ENCODE measurements at regions of chr2 and their contacts with region 1.

Region 1: GRCh38 chr2:164620873-164621626 is at the start of gene GRB14:
- DNase-seq: peak; percentile 80
- ATAC-seq: peak; percentile 87
- H3K4me3 Mint-ChIP-seq: peak within 1 kb of the TSS; percentile 84
- H3K27ac Mint-ChIP-seq: peak within 1 kb of the TSS; percentile 83
- H3K4me1 Mint-ChIP-seq: peaks cover 49% of the 10 kb centered on the region
- H3K27me3 Mint-ChIP-seq: no peaks in the 10 kb centered on the region
- CTCF ChIP-seq: no peak
- total RNA-seq, gene GRB14: 14.9 to 17.2 TPM (median 17.2 TPM) in 3 replicates

Region 2: GRCh38 chr2:164581050-164581449 is 40.0 kb before region 1 on chr2:
- CTCF ChIA-PET with region 1: no interaction called
- POLR2A ChIA-PET with region 1: interaction called, 11 read pairs
- DNase-seq: no peak
- ATAC-seq: no peak
- H3K4me3 Mint-ChIP-seq: no peak overlapping the region
- H3K27ac Mint-ChIP-seq: peak overlapping the region; percentile 2
- H3K4me1 Mint-ChIP-seq: peaks cover 7% of the 10 kb centered on the region
- H3K27me3 Mint-ChIP-seq: no peaks in the 10 kb centered on the region
- CTCF ChIP-seq: no peak

Region 3: DNA sequence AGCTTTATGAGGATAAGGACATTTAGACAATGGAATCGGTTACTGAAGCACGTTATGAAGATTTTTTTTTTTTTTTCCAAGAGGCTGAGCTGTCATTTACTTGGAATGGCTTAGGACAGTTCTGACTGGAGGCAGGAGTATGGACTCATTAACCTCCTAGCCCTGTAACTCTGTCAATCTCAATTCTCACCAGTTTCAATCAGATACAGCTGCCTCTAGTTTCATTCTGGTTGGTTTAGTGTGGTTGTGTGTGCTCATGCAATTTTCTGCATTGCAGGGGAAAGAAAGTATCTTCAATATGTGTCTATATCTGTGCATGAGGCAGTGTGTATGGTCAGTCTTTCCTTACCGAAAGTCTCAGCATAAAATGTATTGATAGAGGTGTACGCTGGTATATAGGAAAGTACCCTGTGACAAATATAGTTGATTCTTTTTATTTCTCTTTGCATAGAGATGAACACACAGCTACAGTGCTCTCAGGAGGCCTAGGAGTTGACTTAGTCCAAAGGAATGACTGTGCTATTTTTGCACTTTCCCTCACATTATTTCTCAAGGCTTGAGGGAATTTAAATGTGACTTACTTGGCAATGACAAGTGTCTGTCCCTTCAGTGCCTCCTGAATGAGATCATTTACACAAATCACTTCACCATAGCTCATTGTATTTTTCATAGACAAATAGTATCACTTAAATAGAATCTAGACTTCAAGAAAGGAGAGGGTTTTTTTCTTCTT is 50.8 kb after region 1 on chr2:
- CTCF ChIA-PET with region 1: no interaction called
- POLR2A ChIA-PET with region 1: no interaction called
- DNase-seq: no peak
- ATAC-seq: no peak
- H3K4me3 Mint-ChIP-seq: no peak overlapping the region
- H3K27ac Mint-ChIP-seq: no peak overlapping the region
- H3K4me1 Mint-ChIP-seq: no peaks in the 10 kb centered on the region
- H3K27me3 Mint-ChIP-seq: no peaks in the 10 kb centered on the region
- CTCF ChIP-seq: no peak